Dendritic cell treated with granulocyte-macrophage colony-stimulating factor and Interleukin-4, amounts not matched to agents 40 ng/mL and 50 ng/mL, for 4 days (primary cell): ENCODE measurements at regions of chr10 and their contacts with region 1.

Region 1: GRCh38 chr10:110225756-110226542 is 18.5 kb downstream of the MXI1 start:
- H3K4me3 Mint-ChIP-seq: peak overlapping the region; percentile 97
- H3K27ac Mint-ChIP-seq: peak overlapping the region; percentile 93
- H3K4me1 Mint-ChIP-seq: peaks cover 55% of the 10 kb centered on the region
- H3K27me3 Mint-ChIP-seq: no peaks in the 10 kb centered on the region

Region 2: DNA sequence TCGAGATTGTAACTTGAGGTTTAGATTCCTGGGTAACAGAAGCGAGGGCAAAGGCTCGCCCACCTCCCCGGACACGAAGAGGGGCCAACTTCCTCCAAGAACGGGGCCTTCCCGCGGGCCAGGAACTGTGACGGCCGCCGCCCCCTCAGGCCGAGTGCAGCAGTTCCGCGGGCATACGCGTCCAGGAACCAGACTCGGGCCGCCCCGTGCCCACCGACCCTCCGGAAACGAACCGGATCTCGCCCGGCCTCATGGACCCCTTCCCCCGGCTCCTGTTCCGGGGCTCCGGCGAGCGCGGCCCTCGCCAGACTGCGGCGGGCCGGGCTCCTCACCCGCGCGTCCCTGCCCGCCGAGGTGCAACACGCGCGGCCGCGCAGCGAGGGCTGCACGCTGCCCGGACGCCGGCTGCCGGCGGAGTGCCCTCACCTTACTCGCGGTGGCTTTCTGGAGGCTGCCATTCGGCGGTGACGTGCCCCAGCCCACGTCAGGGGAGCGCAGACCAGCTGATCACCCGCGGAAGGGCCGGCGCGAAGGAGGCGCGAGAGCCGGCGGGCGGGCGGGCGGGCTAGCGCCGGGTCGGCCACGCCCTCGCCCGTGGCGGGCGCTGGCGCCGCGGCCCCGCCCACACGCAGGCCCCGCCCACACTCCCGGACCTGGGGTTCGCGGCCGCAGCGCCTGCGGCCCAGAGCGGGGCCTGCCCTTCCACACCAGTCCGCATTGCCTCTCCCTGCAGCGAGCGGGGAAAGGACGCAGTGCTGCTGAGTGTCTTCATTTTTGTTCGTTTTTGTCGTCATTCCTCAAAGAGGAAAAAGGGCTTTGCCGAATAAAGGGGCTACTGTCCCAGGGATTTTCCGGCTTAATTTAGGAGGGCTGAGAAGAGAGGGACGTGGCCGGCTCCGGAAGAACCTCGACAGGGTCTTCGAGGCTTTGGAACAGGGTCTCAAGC is 302.7 kb before region 1 on chr10 and contains the start of gene XPNPEP1:
- intact Hi-C with region 1: loop called (anchors 5 kb)
- H3K4me3 Mint-ChIP-seq: peak within 1 kb of the TSS; percentile 86
- H3K27ac Mint-ChIP-seq: peak within 1 kb of the TSS; percentile 89
- H3K4me1 Mint-ChIP-seq: peaks cover 46% of the 10 kb centered on the region
- H3K27me3 Mint-ChIP-seq: no peaks in the 10 kb centered on the region

Region 3: DNA sequence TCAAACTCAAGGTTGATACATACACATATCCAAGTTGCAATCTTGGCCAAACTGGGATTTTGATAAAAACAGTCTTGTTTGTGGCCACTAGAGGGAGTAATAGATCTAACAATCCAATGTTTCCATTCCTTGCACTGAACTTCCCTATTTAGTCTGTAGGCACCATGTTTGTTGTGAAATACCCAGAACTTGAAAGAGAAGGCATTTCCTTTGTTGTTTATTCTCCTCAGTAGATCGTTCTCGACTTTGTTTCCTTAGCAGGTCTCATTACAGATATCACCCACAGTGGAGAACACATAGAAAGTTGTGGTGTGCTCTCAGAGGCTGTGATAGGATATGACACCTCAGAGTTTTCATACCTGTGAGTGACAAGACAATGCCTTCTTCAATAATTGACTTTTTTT is 88.8 kb before region 1 on chr10:
- intact Hi-C with region 1: loop called (anchors 1 kb)
- H3K4me3 Mint-ChIP-seq: peak overlapping the region; percentile 6
- H3K27ac Mint-ChIP-seq: peak overlapping the region; percentile 74
- H3K4me1 Mint-ChIP-seq: peaks cover 26% of the 10 kb centered on the region
- H3K27me3 Mint-ChIP-seq: no peaks in the 10 kb centered on the region

Region 4: DNA sequence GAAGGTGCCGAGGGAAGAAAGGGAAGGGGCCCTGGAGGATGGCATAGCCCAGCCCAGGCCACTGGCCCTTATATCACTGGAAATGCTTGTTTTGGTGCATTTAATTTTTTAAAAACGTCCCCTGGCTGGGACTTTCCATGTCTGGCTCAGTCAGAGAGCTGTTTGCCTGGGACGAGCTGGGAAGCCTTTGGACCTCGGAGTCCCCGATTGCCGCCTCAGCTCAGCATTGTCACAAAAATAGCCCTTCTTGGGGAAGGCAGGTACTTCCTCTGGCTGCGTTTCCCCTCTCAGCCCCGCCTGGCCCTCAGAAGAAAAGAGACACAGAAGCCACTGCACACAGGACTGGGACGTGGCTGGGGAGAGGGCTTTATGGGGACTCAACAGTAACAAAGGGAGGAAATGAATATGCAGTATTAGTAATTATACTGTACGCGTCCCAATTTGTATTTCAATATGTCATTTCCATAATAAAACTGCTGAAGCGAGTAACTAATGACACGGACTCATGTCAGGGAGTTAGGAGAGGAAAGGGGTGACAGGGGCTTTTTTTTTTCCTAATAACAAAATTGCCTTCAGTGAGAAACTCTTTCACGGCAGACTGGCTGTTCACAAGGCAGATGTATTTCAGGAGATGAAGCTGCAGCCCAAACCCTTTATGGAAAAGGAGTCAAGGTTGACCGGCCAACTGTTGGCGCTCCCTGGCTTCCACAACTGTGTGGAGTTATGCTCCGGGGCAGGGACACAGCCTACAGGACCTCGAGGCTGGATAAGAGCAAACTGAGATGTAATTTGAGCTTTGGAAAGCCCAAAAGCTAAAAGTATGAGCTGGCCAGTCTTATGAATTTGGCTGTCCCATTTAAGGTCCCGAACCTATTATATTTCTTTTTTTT is 49.6 kb before region 1 on chr10:
- intact Hi-C with region 1: no loop called
- H3K4me3 Mint-ChIP-seq: peak overlapping the region; percentile 32
- H3K27ac Mint-ChIP-seq: no peak overlapping the region
- H3K4me1 Mint-ChIP-seq: peaks cover 18% of the 10 kb centered on the region
- H3K27me3 Mint-ChIP-seq: peaks cover 31% of the 10 kb centered on the region

Region 5: DNA sequence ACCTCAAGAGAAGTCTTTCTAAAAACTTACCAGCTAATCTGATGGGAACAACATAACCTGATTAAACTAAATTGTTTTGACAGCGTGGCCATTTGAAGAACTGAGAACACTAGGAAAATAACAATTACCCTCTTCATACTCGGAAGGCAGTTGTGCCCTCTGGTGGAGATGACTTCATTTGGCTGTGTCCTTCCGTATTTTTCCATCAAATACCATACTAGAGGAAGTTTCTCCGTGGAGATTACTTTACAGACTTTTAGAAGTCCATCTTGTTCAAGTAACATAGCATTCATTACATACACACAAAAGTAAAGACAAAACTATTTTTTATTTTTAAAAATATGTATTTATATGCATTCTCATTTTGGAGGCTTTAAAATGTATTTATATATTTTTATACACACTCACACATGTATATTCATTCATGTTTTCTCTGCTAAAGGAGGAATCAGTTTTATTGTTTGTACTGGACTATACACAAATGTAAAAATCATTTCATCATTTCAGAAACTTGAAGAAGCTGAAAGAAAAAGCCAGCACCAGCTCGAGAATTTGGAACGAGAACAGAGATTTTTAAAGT is 53.5 kb after region 1 on chr10:
- intact Hi-C with region 1: loop called (anchors 5 kb)
- H3K4me3 Mint-ChIP-seq: no peak overlapping the region
- H3K27ac Mint-ChIP-seq: no peak overlapping the region
- H3K4me1 Mint-ChIP-seq: peaks cover 3% of the 10 kb centered on the region
- H3K27me3 Mint-ChIP-seq: no peaks in the 10 kb centered on the region

Region 6: DNA sequence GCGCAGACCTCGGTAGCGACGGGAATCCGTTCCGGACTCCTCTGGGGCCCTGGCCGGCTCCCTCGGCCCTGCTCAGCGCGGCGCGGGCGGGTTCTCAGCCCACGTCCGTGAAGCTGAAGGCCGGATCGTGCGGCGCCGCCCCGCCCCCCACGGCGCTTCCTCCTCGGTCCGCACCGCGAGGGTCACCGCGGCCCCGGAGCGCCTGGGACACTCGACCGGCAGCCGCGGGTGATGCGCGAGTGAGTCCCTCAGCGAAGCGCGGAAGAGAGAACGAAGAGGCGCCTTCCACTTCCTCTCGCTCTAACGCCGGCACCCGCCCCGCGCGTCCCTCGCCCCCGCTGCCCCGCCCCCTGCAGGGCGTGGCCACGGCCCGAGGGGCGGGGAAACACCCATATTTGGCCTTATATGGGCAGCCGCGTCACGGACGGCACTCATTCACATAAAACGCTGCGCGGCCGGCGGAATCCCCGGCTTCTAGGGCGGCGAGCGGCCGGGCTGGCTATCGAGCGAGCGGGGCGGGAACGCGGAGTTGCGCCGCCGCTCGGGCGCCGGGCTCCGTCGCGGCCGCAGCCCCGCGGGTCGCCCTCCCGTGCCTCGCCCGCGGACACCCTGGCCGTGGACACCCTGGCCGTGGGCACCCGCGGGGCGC is 271.6 kb after region 1 on chr10 and contains the start of gene DUSP5:
- intact Hi-C with region 1: loop called (anchors 5 kb)
- H3K4me3 Mint-ChIP-seq: peak within 1 kb of the TSS; percentile 99
- H3K27ac Mint-ChIP-seq: peak within 1 kb of the TSS; percentile 84
- H3K4me1 Mint-ChIP-seq: peaks cover 68% of the 10 kb centered on the region
- H3K27me3 Mint-ChIP-seq: peaks cover 13% of the 10 kb centered on the region